Uterus (tissue), 4 donors: ENCODE measurements at regions of chr2 and their contacts with region 1.

Region 1: GRCh38 chr2:30706534-30707304 is 100.5 kb downstream of the CAPN13 start:
- DNase-seq: peak; percentile 69 to 76
- H3K4me3 ChIP-seq: no peak overlapping the region
- H3K27ac ChIP-seq: peak overlapping the region in 1 of 2 donors; percentile 5
- H3K4me1 ChIP-seq: no peaks in the 10 kb centered on the region
- H3K27me3 ChIP-seq: no peaks in the 10 kb centered on the region
- CTCF ChIP-seq: peak; percentile 86 to 89 (median 87)
- POLR2A ChIP-seq: no peak

Region 2: DNA sequence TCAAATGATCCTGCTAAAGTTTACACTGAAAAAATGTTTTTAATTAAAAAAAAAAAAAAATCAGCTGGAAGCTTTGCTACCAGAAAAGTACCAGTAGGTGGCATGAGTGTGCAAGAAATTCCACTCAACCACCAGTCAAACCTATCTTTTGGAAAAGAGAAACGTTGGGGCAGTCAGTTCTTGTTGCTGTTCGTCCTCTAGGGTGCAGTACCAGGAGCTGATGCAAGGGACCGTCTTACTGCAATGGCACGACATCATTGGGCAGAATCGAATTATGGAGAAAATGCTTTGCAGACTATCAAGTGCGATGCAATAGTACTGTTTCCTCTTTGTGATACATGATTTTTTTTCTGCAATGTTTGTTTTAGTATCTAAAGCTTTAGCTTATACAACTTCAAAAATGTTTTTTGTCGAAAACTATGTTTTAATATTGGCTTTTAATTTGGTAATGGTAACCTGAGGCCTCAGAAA is 541.6 kb before region 1 on chr2:
- intact Hi-C with region 1: loop called (anchors 10 kb)
- DNase-seq: peak; percentile 31 to 58
- H3K4me3 ChIP-seq: no peak overlapping the region
- H3K27ac ChIP-seq: peak overlapping the region in 1 of 2 donors; percentile 1
- H3K4me1 ChIP-seq: no peaks in the 10 kb centered on the region
- H3K27me3 ChIP-seq: no peaks in the 10 kb centered on the region
- CTCF ChIP-seq: peak; percentile 76 to 84 (median 78)
- POLR2A ChIP-seq: no peak

Region 3: GRCh38 chr2:30208452-30208851 is 498.3 kb before region 1 on chr2:
- intact Hi-C with region 1: loop called (anchors 5 kb)
- DNase-seq: peak; percentile 71 to 75
- H3K4me3 ChIP-seq: no peak overlapping the region
- H3K27ac ChIP-seq: no peak overlapping the region
- H3K4me1 ChIP-seq: no peaks in the 10 kb centered on the region
- H3K27me3 ChIP-seq: no peaks in the 10 kb centered on the region
- CTCF ChIP-seq: peak; percentile 91 to 95 (median 94)
- POLR2A ChIP-seq: no peak

Region 4: DNA sequence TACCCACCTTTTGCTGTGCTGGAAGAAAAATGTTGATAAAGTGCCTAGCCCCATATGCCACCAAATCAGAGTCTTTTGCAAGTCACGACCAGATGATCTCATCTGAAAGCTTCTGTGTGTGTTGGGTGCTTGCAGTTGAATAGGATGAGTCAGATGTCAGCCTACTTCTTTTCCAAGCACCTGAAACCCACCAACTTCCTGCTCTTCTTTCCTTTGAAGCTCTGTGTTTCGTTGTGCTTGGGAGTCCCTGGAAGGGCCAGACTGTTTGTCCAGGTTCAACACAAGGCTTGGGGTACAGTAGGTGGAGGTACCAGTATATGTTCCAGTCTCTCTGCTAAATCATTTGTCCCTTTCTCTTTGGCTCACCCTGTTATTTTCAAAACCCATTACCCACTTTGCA is 296.5 kb before region 1 on chr2:
- intact Hi-C with region 1: no loop called
- DNase-seq: no peak
- H3K4me3 ChIP-seq: no peak overlapping the region
- H3K27ac ChIP-seq: peak overlapping the region; percentile 83 to 84
- H3K4me1 ChIP-seq: peaks cover 23 to 25% of the 10 kb centered on the region in 2 donors
- H3K27me3 ChIP-seq: no peaks in the 10 kb centered on the region
- CTCF ChIP-seq: no peak
- POLR2A ChIP-seq: no peak

Region 5: GRCh38 chr2:30527859-30528258 is 178.9 kb before region 1 on chr2:
- intact Hi-C with region 1: no loop called
- DNase-seq: no peak
- H3K4me3 ChIP-seq: no peak overlapping the region
- H3K27ac ChIP-seq: no peak overlapping the region
- H3K4me1 ChIP-seq: peaks cover 0 to 4% of the 10 kb centered on the region in 2 donors
- H3K27me3 ChIP-seq: no peaks in the 10 kb centered on the region
- CTCF ChIP-seq: no peak
- POLR2A ChIP-seq: no peak